Caco-2 (cell line): ENCODE measurements at regions of chr16 and their contacts with region 1.

Region 1: GRCh38 chr16:80369138-80369958 is 171.4 kb upstream of the DYNLRB2 start:
- DNase-seq: peak; percentile 74 to 79
- H3K4me3 ChIP-seq: no peak overlapping the region
- H3K4me3 Mint-ChIP-seq: no peak overlapping the region
- H3K27ac Mint-ChIP-seq: no peak overlapping the region
- H3K4me1 ChIP-seq: peaks cover 9% of the 10 kb centered on the region
- H3K4me1 Mint-ChIP-seq: peaks cover 10% of the 10 kb centered on the region
- H3K27me3 ChIP-seq: no peaks in the 10 kb centered on the region
- H3K27me3 Mint-ChIP-seq: no peaks in the 10 kb centered on the region
- CTCF ChIP-seq: peak; percentile 68 to 84

Region 2: GRCh38 chr16:79278506-79278905 is 1090.8 kb before region 1 on chr16:
- CTCF ChIA-PET with region 1: no interaction called
- POLR2A ChIA-PET with region 1: no interaction called
- intact Hi-C with region 1: no loop called
- DNase-seq: no peak
- H3K4me3 ChIP-seq: no peak overlapping the region
- H3K4me3 Mint-ChIP-seq: no peak overlapping the region
- H3K27ac Mint-ChIP-seq: no peak overlapping the region
- H3K4me1 ChIP-seq: no peaks in the 10 kb centered on the region
- H3K4me1 Mint-ChIP-seq: no peaks in the 10 kb centered on the region
- H3K27me3 ChIP-seq: no peaks in the 10 kb centered on the region
- H3K27me3 Mint-ChIP-seq: peaks cover 27% of the 10 kb centered on the region
- CTCF ChIP-seq: no peak

Region 3: DNA sequence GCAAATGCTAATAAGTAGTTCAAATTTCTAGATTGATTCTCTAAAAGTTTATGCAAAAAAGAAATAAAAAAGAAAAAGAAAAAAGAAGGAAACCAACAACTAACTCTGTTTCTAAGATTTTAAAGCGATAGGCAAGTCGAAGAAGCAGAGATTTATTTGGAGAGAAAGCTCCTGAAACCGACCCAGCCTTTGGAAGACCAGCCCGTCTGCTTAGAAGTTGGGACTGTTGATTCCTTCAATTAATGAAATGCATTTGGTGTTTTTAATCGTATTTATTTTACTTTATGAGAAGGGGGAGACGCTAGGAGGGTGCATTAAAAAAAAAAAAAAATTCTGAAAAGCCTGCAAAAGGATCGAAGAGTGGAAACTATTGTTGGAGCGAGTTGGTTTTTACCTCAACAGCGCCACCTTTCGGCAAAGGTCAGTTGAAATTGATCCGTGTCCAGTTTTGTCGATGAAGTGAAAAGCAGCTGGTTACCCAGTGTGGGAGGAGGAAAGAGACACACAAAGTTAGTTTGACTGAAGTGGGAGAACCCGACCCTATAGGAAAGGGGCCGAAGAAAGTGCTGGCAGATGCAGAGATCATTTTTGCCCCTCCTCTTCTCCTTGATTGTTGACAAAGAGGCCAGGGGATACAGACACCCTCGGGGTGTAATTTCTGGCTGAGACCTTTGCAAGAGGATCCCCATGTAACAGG is 767.3 kb before region 1 on chr16:
- CTCF ChIA-PET with region 1: interaction called, 9 read pairs
- POLR2A ChIA-PET with region 1: no interaction called
- intact Hi-C with region 1: loop called (anchors 5 kb)
- DNase-seq: peak; percentile 77 to 83
- H3K4me3 ChIP-seq: peak overlapping the region; percentile 56
- H3K4me3 Mint-ChIP-seq: peak overlapping the region; percentile 96
- H3K27ac Mint-ChIP-seq: no peak overlapping the region
- H3K4me1 ChIP-seq: peaks cover 9% of the 10 kb centered on the region
- H3K4me1 Mint-ChIP-seq: peaks cover 6% of the 10 kb centered on the region
- H3K27me3 ChIP-seq: peaks cover 6% of the 10 kb centered on the region
- H3K27me3 Mint-ChIP-seq: peaks cover 25% of the 10 kb centered on the region
- CTCF ChIP-seq: peak; percentile 84 to 93

Region 4: DNA sequence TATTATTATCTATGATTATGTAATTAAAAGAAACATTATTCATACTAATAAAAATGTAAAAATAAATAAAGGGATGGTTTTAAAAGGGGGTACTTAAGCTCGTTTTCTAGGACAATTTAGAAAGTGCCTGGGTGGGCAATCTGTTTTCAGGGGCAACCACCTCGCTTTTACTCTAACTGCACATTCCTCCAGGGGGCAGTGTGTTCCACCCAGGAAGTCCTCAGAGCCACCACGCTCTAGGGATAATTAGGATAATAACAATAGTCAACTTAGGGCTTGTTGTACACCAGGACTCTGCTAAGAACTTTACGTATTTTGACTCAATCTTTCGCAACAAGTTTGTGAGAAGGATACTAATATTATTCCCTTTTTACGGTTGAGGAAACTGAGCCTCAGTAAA is 372.1 kb before region 1 on chr16:
- CTCF ChIA-PET with region 1: no interaction called
- POLR2A ChIA-PET with region 1: no interaction called
- intact Hi-C with region 1: loop called (anchors 1 kb)
- DNase-seq: peak in 1 of 2 experiments; percentile 30
- H3K4me3 ChIP-seq: no peak overlapping the region
- H3K4me3 Mint-ChIP-seq: no peak overlapping the region
- H3K27ac Mint-ChIP-seq: peak overlapping the region; percentile 14
- H3K4me1 ChIP-seq: peaks cover 8% of the 10 kb centered on the region
- H3K4me1 Mint-ChIP-seq: peaks cover 24% of the 10 kb centered on the region
- H3K27me3 ChIP-seq: no peaks in the 10 kb centered on the region
- H3K27me3 Mint-ChIP-seq: no peaks in the 10 kb centered on the region
- CTCF ChIP-seq: peak; percentile 32 to 42

Region 5: DNA sequence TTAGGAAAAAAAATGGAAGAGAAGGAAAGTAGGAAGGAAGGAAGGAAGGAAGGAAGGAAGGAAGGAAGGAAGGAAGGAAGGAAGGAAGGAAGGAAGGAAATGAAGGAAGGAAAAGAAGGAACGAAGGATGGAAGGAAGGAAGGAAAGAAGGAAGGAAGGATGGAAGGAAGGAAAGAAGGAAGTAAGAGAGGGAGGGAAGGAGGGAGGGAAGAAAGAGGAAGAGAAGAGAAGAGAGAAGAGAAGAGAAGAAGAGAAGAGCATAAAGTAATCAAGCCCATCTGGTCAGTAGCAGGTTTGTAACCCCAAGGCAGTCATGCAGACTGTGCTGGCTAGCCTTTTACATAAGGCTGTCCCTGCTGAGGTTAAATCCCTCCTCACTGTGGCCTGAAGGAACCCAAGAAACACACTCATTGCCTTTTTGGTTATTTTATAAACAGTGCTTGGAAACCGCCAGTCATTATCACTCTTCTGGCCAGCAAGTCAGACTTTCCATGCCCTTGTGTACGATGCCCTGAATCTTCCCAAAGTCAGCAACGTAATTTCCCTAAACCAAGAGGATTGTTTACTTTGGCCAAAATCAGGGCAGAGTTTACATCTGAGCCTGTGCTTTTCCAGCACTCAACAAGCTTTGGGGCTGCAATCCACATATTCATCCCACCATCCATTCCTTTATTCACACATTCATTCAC is 359.2 kb before region 1 on chr16:
- CTCF ChIA-PET with region 1: no interaction called
- POLR2A ChIA-PET with region 1: no interaction called
- intact Hi-C with region 1: no loop called
- DNase-seq: no peak
- H3K4me3 ChIP-seq: no peak overlapping the region
- H3K4me3 Mint-ChIP-seq: no peak overlapping the region
- H3K27ac Mint-ChIP-seq: no peak overlapping the region
- H3K4me1 ChIP-seq: peaks cover 32% of the 10 kb centered on the region
- H3K4me1 Mint-ChIP-seq: peaks cover 24% of the 10 kb centered on the region
- H3K27me3 ChIP-seq: no peaks in the 10 kb centered on the region
- H3K27me3 Mint-ChIP-seq: no peaks in the 10 kb centered on the region
- CTCF ChIP-seq: no peak

Region 6: DNA sequence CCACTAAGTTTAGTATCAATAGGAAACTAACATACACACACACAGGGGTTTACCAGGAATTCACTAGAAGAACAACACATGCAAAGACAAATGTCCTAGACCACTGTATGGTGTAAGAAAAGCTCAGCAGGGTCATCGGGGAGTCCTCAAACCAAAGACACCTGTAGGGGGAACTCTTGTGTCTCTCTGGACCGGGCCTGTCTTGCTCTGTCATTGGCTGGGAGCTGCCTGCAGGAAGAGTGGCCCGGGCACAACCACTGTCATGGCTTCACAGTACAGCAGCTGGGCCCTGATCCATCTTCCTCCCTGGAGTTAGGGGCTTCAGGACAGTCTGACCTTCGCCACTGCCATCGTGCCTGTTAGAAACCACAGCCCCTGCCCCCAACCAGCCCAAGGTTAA is 92.2 kb before region 1 on chr16:
- CTCF ChIA-PET with region 1: interaction called, 14 read pairs
- POLR2A ChIA-PET with region 1: no interaction called
- intact Hi-C with region 1: loop called (anchors 1 kb)
- DNase-seq: peak in 1 of 2 experiments; percentile 27
- H3K4me3 ChIP-seq: no peak overlapping the region
- H3K4me3 Mint-ChIP-seq: no peak overlapping the region
- H3K27ac Mint-ChIP-seq: no peak overlapping the region
- H3K4me1 ChIP-seq: peaks cover 4% of the 10 kb centered on the region
- H3K4me1 Mint-ChIP-seq: peaks cover 12% of the 10 kb centered on the region
- H3K27me3 ChIP-seq: no peaks in the 10 kb centered on the region
- H3K27me3 Mint-ChIP-seq: no peaks in the 10 kb centered on the region
- CTCF ChIP-seq: no peak

Region 7: DNA sequence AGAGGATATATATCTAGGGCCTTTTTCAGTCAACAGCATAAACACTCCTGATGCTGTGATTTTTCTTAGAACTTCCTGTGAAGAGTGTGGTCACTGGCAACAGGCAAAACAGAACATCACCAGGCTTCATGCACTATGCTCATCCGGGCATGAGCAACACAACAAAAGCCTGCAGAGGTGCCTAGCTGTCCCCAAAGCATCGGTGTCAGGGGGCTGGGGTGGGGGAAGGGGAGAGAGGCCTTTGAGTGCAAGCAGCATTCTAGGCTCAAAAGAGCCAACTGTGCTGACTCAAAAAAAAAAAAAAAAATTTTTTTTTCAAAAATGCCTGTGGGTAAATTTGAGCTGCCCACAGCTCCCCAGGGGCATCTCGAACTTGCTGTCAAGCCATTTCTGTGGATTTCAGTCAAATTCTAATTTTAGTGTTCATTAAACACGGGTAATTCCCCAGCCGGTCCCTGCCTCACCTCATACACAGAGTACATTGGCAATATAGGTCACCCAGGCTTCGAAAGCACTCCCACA is 23.2 kb before region 1 on chr16:
- CTCF ChIA-PET with region 1: interaction called, 8 read pairs
- POLR2A ChIA-PET with region 1: no interaction called
- intact Hi-C with region 1: loop called (anchors 1 kb)
- DNase-seq: no peak
- H3K4me3 ChIP-seq: no peak overlapping the region
- H3K4me3 Mint-ChIP-seq: no peak overlapping the region
- H3K27ac Mint-ChIP-seq: no peak overlapping the region
- H3K4me1 ChIP-seq: peaks cover 46% of the 10 kb centered on the region
- H3K4me1 Mint-ChIP-seq: peaks cover 23% of the 10 kb centered on the region
- H3K27me3 ChIP-seq: no peaks in the 10 kb centered on the region
- H3K27me3 Mint-ChIP-seq: no peaks in the 10 kb centered on the region
- CTCF ChIP-seq: no peak

Region 8: GRCh38 chr16:80437707-80438106 is 68.4 kb after region 1 on chr16:
- CTCF ChIA-PET with region 1: no interaction called
- POLR2A ChIA-PET with region 1: no interaction called
- intact Hi-C with region 1: no loop called
- DNase-seq: no peak
- H3K4me3 ChIP-seq: no peak overlapping the region
- H3K4me3 Mint-ChIP-seq: no peak overlapping the region
- H3K27ac Mint-ChIP-seq: no peak overlapping the region
- H3K4me1 ChIP-seq: no peaks in the 10 kb centered on the region
- H3K4me1 Mint-ChIP-seq: no peaks in the 10 kb centered on the region
- H3K27me3 ChIP-seq: no peaks in the 10 kb centered on the region
- H3K27me3 Mint-ChIP-seq: peaks cover 10% of the 10 kb centered on the region
- CTCF ChIP-seq: peak; percentile 19 to 30

Region 9: GRCh38 chr16:80466024-80466987 is 97.0 kb after region 1 on chr16:
- CTCF ChIA-PET with region 1: interaction called, 13 read pairs
- POLR2A ChIA-PET with region 1: no interaction called
- intact Hi-C with region 1: loop called (anchors 5 kb)
- DNase-seq: peak; percentile 70 to 76
- H3K4me3 ChIP-seq: no peak overlapping the region
- H3K4me3 Mint-ChIP-seq: no peak overlapping the region
- H3K27ac Mint-ChIP-seq: no peak overlapping the region
- H3K4me1 ChIP-seq: peaks cover 27% of the 10 kb centered on the region
- H3K4me1 Mint-ChIP-seq: peaks cover 24% of the 10 kb centered on the region
- H3K27me3 ChIP-seq: no peaks in the 10 kb centered on the region
- H3K27me3 Mint-ChIP-seq: no peaks in the 10 kb centered on the region
- CTCF ChIP-seq: peak; percentile 90 to 99

Region 10: GRCh38 chr16:80682421-80683070 is 313.2 kb after region 1 on chr16:
- CTCF ChIA-PET with region 1: no interaction called
- POLR2A ChIA-PET with region 1: no interaction called
- intact Hi-C with region 1: no loop called
- DNase-seq: no peak
- H3K4me3 ChIP-seq: no peak overlapping the region
- H3K4me3 Mint-ChIP-seq: no peak overlapping the region
- H3K27ac Mint-ChIP-seq: no peak overlapping the region
- H3K4me1 ChIP-seq: no peaks in the 10 kb centered on the region
- H3K4me1 Mint-ChIP-seq: peaks cover 6% of the 10 kb centered on the region
- H3K27me3 ChIP-seq: no peaks in the 10 kb centered on the region; the same call in 1 of the 2 replicates
- H3K27me3 Mint-ChIP-seq: peaks cover 11% of the 10 kb centered on the region
- CTCF ChIP-seq: no peak